ENCODE measurements at regions of chr3 and their contacts with region 1.

Region 1: GRCh38 chr3:49358217-49358883 is at the start of gene GPX1:
- DNase-seq: peak in 1 of 2 donors; percentile 96
- H3K4me3 ChIP-seq: peak within 1 kb of the TSS; percentile 78 to 89
- H3K27ac ChIP-seq: peak within 1 kb of the TSS; percentile 91
- H3K4me1 ChIP-seq: peaks cover 42% of the 10 kb centered on the region
- H3K27me3 ChIP-seq: no peaks in the 10 kb centered on the region
- CTCF ChIP-seq: no peak
- POLR2A ChIP-seq: peak in 1 of 2 donors; percentile 95
- total RNA-seq, gene GPX1: 326 TPM

Region 2: DNA sequence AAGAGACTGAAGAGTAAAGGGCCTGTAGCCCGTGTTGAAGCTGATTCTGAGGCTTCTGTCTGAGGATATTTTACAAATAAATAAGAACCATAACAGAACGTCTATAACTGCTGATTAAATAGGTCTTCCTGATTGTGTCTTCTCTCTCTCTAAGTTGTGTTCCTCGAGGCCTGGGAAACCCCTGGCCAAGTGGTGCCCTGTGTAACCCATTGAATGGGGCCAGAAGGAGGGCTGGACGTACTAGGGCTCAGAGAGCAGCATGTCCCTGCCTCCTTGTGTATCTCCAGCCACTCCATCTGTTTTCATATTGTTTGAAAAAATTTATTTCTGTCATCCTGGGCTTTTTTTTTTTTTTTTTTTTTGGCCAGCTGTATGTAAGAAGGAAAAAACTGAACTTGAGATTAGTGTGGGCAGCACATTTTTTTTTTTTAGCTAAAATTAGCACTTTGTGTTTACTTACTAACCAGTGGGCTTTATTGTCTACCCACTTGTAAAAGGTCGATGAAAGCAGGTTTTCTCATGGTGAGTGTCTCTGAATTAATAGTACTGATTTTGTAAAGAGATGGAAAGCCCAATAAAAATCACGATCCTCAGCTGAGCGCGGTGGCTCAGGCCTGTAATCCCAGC is 1544.7 kb before region 1 on chr3:
- intact Hi-C with region 1: no loop called
- DNase-seq: no peak
- H3K4me3 ChIP-seq: no peak overlapping the region
- H3K27ac ChIP-seq: no peak overlapping the region
- H3K4me1 ChIP-seq: no peaks in the 10 kb centered on the region
- H3K27me3 ChIP-seq: no peaks in the 10 kb centered on the region
- CTCF ChIP-seq: no peak
- POLR2A ChIP-seq: no peak

Region 3: GRCh38 chr3:49140080-49140479 is 218.3 kb before region 1 on chr3:
- intact Hi-C with region 1: no loop called
- DNase-seq: no peak
- H3K4me3 ChIP-seq: no peak overlapping the region
- H3K27ac ChIP-seq: no peak overlapping the region
- H3K4me1 ChIP-seq: no peaks in the 10 kb centered on the region
- H3K27me3 ChIP-seq: no peaks in the 10 kb centered on the region
- CTCF ChIP-seq: no peak
- POLR2A ChIP-seq: no peak

Region 4: DNA sequence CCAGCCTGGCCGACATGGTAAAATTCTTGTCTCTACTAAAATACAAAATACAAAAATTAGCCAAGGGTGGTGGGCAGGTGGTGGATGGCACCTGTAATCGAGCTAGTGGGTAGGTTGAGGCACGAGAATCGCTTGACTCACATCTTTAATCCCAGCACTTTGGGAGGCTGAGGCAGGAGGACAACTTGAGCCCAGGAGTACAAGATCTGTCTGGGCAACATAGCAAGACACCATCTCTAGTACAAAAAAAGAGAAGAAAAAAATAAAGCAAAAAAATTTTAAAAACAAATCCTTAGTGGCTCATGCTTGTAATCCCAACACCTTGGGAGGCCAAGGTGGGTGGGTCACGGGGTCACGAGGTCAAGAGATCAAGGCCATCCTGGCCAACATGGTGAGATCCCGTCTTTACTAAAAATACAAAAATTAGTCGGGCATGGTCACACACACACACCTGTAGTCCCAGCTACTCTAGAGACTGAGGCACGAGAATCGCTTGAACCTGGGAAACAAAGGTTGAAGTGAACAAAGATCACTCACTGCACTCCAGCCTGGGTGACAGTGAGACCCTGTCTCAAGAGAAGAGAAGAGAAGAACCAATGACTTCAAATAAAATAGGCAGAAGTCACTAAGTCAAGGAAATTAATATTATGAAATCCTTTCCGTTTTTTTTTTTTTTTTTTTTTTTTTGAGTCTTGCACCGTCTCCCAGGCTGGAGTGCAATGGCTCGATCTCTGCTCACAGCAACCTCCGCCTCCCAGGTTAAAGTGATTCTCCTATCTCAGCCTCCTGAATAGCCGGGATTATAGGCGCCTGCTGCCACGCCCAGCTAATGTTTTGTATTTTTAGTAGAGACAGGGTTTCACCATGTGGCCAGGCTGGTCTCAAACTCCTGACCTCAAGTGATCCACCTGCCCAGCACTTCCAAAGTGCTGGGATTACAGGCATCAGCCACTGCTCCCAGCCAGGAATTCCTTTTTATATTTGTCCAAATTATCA is 48.5 kb after region 1 on chr3:
- intact Hi-C with region 1: loop called (anchors 5 kb)
- DNase-seq: no peak
- H3K4me3 ChIP-seq: no peak overlapping the region
- H3K27ac ChIP-seq: peak overlapping the region; percentile 7
- H3K4me1 ChIP-seq: peaks cover 56% of the 10 kb centered on the region
- H3K27me3 ChIP-seq: no peaks in the 10 kb centered on the region
- CTCF ChIP-seq: no peak
- POLR2A ChIP-seq: no peak

Region 5: GRCh38 chr3:49469037-49469935 is 110.9 kb after region 1 on chr3:
- intact Hi-C with region 1: no loop called
- DNase-seq: no peak
- H3K4me3 ChIP-seq: peak overlapping the region; percentile 72 to 83
- H3K27ac ChIP-seq: peak overlapping the region; percentile 91
- H3K4me1 ChIP-seq: peaks cover 41% of the 10 kb centered on the region
- H3K27me3 ChIP-seq: no peaks in the 10 kb centered on the region
- CTCF ChIP-seq: no peak
- POLR2A ChIP-seq: no peak

Region 6: GRCh38 chr3:49786241-49786958 is 428.1 kb after region 1 on chr3 and contains the start of gene IP6K1:
- intact Hi-C with region 1: no loop called
- DNase-seq: peak in 1 of 2 donors; percentile 100
- H3K4me3 ChIP-seq: peak within 1 kb of the TSS; percentile 74 to 97
- H3K27ac ChIP-seq: peak within 1 kb of the TSS; percentile 96
- H3K4me1 ChIP-seq: peaks cover 48% of the 10 kb centered on the region
- H3K27me3 ChIP-seq: no peaks in the 10 kb centered on the region
- CTCF ChIP-seq: peak in 1 of 3 experiments; percentile 10
- POLR2A ChIP-seq: peak in 1 of 2 donors; percentile 62
- total RNA-seq, gene IP6K1: 46.2 TPM

Measured in vagina (tissue), 2 donors.